Heart left ventricle (tissue), 16 donors: ENCODE measurements at regions of chr2 and their contacts with region 1.

Region 1: DNA sequence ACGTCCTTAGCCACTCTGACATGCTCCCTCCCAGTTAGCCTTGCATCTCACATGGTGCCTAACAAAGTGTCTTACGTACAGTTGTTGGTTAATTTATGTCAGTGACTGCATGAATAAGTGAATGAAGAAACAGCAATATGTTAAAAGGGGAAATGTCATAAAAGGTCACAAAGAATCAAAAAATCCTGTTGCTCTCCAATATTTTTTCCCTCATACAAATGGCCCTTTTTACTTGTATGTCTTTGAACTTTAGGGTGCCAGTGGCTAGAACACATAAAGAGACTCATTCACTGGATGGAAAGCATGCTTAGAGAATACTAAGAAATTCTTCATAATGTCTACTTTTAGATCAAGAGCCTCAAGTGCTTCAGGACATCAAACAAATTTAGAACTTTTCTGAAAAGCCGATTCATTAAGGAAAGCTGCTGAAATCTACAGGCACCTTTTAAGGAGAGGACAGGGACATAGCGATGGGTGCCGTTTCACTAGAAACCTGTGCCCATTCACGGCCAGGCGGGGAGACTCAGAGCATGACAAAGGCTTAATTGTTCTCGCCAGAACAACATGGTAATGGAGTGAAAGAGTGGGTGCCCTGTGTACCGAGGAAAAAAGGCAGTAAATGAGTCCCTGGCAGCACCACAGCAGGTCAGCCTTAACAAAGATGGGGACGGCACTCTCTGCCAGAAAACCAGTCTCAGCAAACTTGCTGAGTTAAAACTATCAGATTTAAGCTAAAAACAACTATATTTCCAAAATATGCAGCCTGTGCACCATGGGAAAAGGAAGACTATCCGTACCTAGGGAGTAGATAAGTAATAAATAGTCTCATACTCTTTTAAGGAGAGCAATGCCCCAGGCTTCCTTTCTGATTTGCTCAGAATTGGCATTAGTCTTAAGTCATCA is 71.6 kb upstream of the SPTBN1 start:
- DNase-seq: no peak
- ATAC-seq: no peak
- H3K4me3 ChIP-seq: no peak overlapping the region
- H3K27ac ChIP-seq: peak overlapping the region in 10 of 12 donors; percentile 3 to 88 (median 82)
- H3K4me1 ChIP-seq: peaks cover 0 to 56% (median 28%) of the 10 kb centered on the region in 12 donors
- H3K27me3 ChIP-seq: no peaks in the 10 kb centered on the region
- CTCF ChIP-seq: no peak
- POLR2A ChIP-seq: no peak

Region 2: DNA sequence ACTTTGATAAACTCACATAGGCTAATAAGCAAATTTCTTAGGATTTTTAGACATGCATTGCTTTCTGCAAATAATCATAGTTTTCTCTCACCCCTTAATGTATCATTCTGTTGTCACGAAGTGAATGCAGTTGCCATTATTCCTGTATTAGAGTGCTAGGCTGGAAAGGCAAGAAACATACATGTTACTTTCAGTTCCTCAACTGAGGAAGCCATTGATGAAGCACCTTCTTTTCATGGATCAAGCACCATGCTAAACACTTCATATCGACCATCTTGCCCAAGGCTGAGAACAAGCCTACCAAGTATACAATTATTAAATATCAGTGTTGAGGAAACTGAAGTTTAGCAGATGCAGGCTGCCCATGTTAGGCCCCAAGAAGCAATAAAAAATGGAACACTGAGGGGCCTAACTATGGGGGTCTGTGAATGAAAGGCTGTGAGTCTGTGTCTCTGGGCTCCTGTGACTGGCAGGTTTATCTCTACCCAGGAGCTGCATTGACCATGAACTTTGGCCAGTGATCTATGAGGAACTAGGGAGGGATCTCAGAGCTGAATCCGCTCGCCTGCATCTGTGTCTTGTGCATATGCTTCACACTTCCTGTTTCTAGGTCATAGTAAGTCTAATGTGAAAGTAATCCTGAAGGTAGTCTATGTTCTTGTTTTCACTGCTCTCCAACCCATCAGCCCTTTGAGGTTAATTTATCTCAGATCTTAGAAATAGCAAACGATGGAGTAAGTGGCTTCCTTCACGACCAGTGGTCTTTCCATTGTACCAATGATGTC is 112.5 kb before region 1 on chr2:
- intact Hi-C with region 1: no loop called
- DNase-seq: no peak
- ATAC-seq: no peak
- H3K4me3 ChIP-seq: no peak overlapping the region
- H3K27ac ChIP-seq: no peak overlapping the region
- H3K4me1 ChIP-seq: peaks cover 0 to 8% (median 0%) of the 10 kb centered on the region in 12 donors
- H3K27me3 ChIP-seq: no peaks in the 10 kb centered on the region
- CTCF ChIP-seq: no peak
- POLR2A ChIP-seq: no peak

Region 3: DNA sequence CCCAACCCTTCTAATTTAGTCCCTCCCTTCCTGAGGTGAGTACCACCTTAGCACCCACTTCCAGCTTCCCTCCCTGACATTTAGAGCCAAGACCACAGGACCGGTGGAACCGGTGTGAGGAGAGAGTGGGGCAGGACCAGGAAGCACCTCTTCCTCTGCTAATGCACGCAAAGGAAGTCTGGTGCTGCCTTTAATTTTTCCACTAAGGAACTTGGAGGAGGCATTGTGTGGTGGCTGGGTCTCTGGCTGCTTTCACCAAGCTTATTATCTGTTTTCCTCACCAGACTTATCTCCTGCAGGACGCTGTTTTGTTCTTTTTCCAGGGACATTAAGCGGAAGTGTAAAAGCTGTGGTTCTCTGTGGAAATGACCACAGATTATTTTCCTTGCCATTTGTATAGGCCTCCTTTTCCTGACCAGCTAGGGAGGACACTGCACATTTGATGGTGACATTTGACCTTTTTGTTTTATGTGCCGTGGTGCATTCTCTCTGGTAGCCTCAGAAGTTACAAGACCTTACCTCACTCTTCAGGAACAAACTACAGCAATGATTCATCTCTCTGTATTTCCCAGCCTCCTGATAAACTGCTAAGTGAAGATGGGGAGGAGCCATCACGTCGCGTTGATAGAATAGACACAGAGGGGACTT is 31.7 kb after region 1 on chr2:
- intact Hi-C with region 1: loop called in 1 of 10 experiments (anchors 5 kb)
- DNase-seq: peak in 3 of 5 donors; percentile 43 to 60 (median 60)
- ATAC-seq: peak; percentile 72 to 90 (median 82)
- H3K4me3 ChIP-seq: no peak overlapping the region
- H3K27ac ChIP-seq: peak overlapping the region; percentile 65 to 88 (median 72)
- H3K4me1 ChIP-seq: peaks cover 0 to 58% (median 45%) of the 10 kb centered on the region in 12 donors
- H3K27me3 ChIP-seq: no peaks in the 10 kb centered on the region
- CTCF ChIP-seq: no peak
- POLR2A ChIP-seq: no peak

Region 4: GRCh38 chr2:54531558-54531957 is 147.0 kb after region 1 on chr2:
- intact Hi-C with region 1: no loop called
- DNase-seq: no peak
- ATAC-seq: no peak
- H3K4me3 ChIP-seq: no peak overlapping the region
- H3K27ac ChIP-seq: peak overlapping the region in 4 of 12 donors; percentile 5 to 51 (median 34)
- H3K4me1 ChIP-seq: peaks cover 3 to 86% (median 62%) of the 10 kb centered on the region in 12 donors
- H3K27me3 ChIP-seq: no peaks in the 10 kb centered on the region
- CTCF ChIP-seq: no peak
- POLR2A ChIP-seq: no peak